ENCODE measurements at regions of chr2 and their contacts with region 1.

Region 1: GRCh38 chr2:20962939-20963557 is 80.8 kb downstream of the APOB start:
- DNase-seq: peak; percentile 63
- CTCF ChIP-seq: peak; percentile 92

Region 2: DNA sequence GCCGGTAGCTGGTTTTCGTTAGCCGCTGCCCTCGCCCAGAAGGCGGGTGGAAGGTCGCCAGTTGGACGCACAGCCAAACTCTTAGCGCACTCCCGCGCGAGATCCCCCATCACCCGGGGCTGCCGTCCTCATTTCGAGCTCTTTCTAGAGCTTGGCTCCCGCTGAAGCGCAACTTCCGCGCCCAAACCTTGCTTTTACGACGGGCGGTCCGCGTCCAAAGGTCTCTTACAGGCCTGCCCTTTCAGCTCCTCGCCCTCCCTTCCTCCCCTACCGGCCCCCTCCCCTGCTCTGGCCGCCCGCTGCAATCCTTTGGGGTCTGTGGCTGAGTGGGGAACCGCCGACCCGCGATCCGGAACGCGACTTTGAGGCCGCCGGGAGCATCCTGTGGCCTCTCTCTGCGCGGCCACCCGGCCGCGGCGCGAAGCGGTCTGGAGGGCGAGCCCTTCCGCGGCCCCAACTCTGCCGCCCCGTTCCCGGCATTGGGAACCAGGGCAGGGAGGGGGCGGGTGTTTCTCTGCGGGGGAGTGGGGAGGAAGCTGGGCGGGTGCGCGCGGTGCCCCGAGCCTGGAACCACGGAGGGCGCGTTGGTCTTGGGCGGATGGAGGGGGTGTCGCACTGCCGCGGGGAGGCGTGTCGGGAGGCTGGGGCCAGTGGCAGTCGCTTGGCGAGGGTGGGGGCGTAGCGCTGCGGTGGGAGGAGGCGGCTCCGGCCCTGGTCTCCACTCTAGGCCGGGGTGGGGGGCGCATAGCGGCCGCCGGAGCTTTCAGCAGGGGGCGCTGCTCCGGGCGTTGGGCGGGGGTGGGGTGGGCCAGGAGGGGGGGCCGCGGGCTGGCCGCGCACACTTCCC is 296.5 kb before region 1 on chr2 and contains the start of gene GDF7:
- CTCF ChIA-PET with region 1: interaction called, 247 read pairs
- POLR2A ChIA-PET with region 1: no interaction called
- DNase-seq: no peak
- CTCF ChIP-seq: peak; percentile 8

Region 3: GRCh38 chr2:20675701-20676352 is 287.2 kb before region 1 on chr2:
- CTCF ChIA-PET with region 1: interaction called, 45 read pairs
- POLR2A ChIA-PET with region 1: no interaction called
- DNase-seq: no peak
- CTCF ChIP-seq: no peak

Region 4: DNA sequence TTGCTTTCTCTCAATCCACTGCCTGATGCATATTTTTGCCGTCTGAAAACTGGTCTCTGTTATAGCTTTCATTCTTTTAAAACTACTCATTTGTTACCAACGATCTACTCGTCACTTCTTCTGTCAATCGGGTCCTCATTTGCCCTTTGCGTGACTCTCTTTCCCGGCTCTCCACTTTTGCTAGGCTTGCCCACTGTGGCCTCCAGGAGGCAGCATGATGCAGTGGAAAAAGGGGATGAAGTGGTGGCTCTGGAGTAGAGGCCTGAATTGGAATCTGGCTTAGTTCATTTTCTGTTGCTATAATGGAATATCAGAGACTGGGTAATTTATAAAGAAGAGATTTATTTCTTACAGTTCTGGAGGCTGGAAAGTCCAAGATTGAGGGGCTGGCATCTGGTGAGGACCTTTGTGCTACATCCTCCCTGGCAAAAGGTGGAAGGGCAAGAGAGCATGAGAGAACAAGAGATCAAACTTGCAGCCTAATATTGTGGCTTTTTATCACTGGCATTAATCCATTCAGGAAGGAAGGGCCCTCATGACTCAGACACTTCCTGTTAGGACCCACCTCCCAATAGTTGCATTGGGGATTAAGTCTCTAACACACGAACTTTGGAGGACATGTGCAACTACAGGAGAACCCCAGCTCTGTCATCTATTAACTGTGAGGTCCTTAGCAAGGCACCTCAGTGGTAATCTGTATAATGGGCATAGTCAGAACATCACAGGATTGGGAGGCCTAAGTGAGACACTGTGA is 280.7 kb before region 1 on chr2:
- CTCF ChIA-PET with region 1: interaction called, 45 read pairs
- POLR2A ChIA-PET with region 1: no interaction called
- DNase-seq: no peak
- CTCF ChIP-seq: peak; percentile 35

Region 5: DNA sequence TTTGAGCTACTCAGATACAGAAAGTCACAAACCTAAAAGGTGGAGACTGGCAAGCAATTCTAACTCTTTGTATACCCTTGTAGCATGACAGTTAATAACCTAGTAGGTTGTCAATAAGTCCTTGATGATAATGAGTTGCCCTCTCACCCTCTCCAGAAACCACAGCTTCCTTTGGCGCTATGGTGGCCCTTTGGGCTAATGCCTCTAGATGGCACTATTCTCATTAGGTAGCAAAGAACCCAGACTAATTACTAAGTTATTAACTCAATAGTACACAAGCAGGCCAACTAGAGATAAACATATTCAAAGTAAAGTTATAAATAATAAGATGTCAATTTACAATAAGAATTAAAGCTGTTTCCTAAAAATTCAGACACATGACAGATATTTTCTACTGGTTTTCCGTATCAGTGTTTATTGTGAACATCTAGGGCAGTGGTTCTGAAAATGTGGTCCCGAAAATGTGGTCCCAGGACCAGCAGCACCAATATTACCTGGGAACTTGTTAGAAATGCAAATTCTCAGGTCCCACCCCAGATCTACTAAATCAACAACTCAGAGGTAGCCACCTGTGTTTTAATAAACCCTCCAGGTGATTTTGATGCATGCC is 181.3 kb before region 1 on chr2:
- CTCF ChIA-PET with region 1: interaction called, 98 read pairs
- POLR2A ChIA-PET with region 1: no interaction called
- DNase-seq: no peak
- CTCF ChIP-seq: peak; percentile 76

Region 6: DNA sequence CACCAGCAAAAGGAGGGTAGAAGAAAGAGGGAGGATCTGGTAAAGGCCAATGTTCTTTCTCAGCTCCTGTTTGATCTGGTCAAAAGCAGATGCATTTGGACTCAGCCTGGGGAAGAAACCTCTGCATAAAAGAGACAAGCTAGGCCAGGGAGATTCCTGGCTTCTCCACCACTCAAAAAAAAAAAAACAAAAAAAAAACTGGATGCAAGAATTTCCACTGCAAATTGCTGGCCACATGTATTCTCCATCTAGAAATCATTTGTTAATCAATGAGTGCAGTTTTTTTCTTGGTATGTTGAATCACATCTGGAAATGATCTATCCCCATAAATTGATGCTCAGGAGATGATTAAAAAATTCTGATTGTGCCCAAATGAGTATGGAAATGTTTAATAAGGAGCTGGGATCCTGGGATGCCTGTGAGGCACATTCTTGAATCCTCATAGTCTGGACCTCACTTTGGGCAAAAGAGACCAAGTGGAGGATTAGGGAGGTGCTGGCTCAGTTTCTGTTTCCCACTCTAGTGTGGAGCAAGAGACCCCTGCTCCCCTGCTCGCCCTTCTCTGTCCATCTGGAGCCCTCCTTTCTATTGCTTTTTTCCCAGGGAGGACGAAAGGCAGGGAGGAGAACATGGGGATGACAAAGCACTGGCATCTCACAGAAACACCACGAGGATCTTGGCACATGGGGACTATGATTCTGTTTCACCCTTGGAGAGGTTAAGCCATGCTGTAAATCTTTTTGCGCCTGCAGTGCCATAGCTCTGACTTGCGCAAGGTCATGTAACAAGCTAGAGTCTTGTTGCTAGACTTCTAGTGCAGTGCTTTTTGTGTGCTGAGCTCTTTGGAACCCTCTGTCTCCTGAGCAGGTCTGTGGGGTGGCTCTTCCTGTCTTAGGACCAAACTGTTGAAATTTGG is 23.2 kb after region 1 on chr2:
- CTCF ChIA-PET with region 1: interaction called, 11 read pairs
- POLR2A ChIA-PET with region 1: no interaction called
- DNase-seq: no peak
- CTCF ChIP-seq: no peak

Region 7: GRCh38 chr2:21317131-21317530 is 354.1 kb after region 1 on chr2:
- CTCF ChIA-PET with region 1: no interaction called
- POLR2A ChIA-PET with region 1: no interaction called
- DNase-seq: peak; percentile 45
- CTCF ChIP-seq: peak; percentile 59